Sigmoid colon (tissue), 7 donors: ENCODE measurements at regions of chr14 and their contacts with region 1.

Region 1: DNA sequence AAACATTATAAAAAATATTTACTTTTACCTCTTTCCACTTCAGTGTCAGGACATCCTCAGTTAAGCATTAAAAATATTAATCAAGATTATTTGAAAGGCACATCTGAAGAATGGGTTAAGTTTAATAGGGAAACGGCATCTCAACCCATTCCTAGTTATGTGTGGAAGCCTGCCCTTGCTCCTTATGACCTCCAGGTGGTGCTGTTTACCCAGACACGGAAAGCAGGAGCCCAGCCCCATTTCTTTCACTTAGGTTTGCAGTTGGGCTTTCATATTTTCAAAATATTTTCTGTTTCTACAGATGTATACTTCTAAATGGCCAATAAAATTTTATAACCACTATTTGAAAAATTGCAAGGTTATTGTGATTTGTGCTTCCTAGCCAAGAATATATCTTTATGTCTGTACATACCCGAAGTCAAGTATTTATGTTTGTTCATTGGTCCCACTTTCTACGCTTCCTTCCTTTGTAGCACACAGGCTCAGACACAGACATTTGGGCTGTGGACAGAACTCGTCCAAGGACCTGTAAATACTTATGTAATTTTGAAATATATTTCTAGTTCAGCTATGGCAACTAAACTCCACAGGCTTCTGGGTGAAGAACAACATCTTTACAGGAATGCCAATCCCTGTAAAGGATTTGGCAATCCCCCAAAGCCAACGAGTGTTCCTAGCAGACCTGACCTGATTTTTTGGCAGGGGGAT is 247.1 kb downstream of the AKAP6 start:
- DNase-seq: peak; percentile 72
- H3K4me3 ChIP-seq: peak overlapping the region in 3 of 4 donors; percentile 21 to 39 (median 31)
- H3K27ac ChIP-seq: peak overlapping the region in 3 of 4 donors; percentile 7 to 39 (median 38)
- H3K4me1 ChIP-seq: peaks cover 0 to 25% (median 11%) of the 10 kb centered on the region in 4 donors
- H3K27me3 ChIP-seq: no peaks in the 10 kb centered on the region
- CTCF ChIP-seq: peak; percentile 84 to 94 (median 89)
- EP300 ChIP-seq: no peak
- POLR2A ChIP-seq: no peak

Region 2: GRCh38 chr14:32536175-32536574 is 40.1 kb before region 1 on chr14:
- intact Hi-C with region 1: no loop called
- DNase-seq: no peak
- H3K4me3 ChIP-seq: no peak overlapping the region
- H3K27ac ChIP-seq: no peak overlapping the region
- H3K4me1 ChIP-seq: peaks cover 0 to under 1% (median 0%) of the 10 kb centered on the region in 4 donors
- H3K27me3 ChIP-seq: no peaks in the 10 kb centered on the region
- CTCF ChIP-seq: no peak
- EP300 ChIP-seq: no peak
- POLR2A ChIP-seq: no peak

Region 3: GRCh38 chr14:32826404-32827082 is 250.3 kb after region 1 on chr14:
- intact Hi-C with region 1: loop called (anchors 10 kb)
- DNase-seq: no peak
- H3K4me3 ChIP-seq: no peak overlapping the region
- H3K27ac ChIP-seq: peak overlapping the region in 3 of 4 donors; percentile 11 to 43 (median 40)
- H3K4me1 ChIP-seq: peaks cover 0 to 16% (median 7%) of the 10 kb centered on the region in 4 donors
- H3K27me3 ChIP-seq: no peaks in the 10 kb centered on the region
- CTCF ChIP-seq: no peak
- EP300 ChIP-seq: no peak
- POLR2A ChIP-seq: no peak

Region 4: DNA sequence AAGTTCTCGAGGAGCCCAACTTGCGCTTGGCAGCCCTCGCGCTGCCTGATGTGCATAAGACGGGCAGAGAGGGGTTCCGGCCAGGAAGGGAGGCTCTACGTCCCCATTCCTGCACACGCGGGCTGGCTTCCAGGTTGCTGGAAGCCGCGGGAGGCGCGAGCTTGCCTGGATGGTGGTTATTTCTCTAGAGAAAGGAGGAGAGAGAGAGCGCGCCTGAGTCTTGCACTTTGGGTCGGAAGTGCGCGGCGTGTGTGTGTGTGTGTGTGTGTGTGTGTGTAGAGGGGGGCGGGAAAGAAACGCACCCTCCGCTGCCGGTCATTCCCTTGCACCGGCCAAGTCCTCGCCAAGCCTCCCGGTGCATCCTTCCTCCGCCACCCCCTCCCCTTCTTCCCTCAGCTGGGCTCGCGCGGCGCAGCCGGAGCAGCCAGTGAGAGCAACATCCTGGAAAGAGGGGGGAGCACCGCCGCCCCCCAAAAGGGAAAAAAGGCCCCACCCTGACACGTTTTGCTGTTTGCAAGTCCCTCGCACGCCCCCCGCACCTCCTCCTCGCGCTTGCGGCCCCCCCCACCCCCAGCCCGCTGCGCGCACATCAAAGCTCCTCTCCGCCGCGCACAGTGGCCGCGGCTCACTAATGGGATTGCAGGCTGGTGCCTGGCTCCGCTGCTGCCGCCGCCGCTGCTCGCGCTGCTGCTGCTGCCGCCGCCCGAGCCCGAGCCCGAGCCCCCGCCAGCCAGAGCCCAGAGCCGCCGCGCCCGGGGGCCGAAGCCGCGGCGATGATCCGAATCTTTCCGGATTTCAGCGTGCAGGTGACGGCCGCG is 358.0 kb after region 1 on chr14:
- intact Hi-C with region 1: loop called (anchors 5 kb)
- DNase-seq: peak; percentile 70
- H3K4me3 ChIP-seq: peak overlapping the region; percentile 49 to 70 (median 62)
- H3K27ac ChIP-seq: peak overlapping the region; percentile 35 to 68 (median 52)
- H3K4me1 ChIP-seq: peaks cover 0 to 35% (median 19%) of the 10 kb centered on the region in 4 donors
- H3K27me3 ChIP-seq: peaks cover 0 to 14% (median 0%) of the 10 kb centered on the region in 3 donors
- CTCF ChIP-seq: no peak
- EP300 ChIP-seq: no peak
- POLR2A ChIP-seq: no peak

Region 5: DNA sequence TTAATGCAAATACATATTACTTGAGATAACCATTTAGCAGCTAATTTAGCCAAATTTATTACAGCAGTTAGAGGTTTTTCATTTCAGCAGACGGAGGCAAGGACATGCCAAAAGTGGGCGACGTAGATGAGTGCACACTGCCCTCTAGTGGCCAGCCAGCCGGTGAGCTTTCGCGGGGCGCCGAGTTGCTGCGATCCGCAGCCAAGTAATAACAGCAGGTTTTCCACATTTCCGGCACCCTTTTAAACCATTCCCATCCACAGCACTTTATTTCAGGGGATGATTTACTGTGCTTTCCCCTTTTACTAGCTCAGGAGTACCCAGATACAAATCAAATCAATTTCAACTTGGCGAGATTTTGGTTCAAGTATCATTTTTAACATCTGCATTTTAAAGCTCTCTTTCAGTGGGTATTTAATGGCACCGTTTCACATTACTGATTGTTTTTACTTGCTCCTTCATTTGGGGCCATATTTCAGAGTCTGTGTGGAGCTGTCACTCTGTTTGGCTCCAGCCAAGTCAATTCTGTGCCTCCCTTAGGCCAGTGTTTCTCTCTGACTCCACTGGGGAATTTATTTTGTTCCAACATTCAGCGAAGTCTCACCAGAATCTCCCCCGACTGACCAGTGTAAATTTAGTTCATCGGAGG is 1216.6 kb after region 1 on chr14:
- intact Hi-C with region 1: loop called (anchors 2 kb)
- DNase-seq: peak; percentile 90
- H3K4me3 ChIP-seq: peak overlapping the region in 3 of 4 donors; percentile 21 to 40 (median 36)
- H3K27ac ChIP-seq: peak overlapping the region in 3 of 4 donors; percentile 14 to 36 (median 32)
- H3K4me1 ChIP-seq: peaks cover 0 to 15% (median 1%) of the 10 kb centered on the region in 4 donors
- H3K27me3 ChIP-seq: no peaks in the 10 kb centered on the region
- CTCF ChIP-seq: peak; percentile 78 to 94 (median 83)
- EP300 ChIP-seq: no peak
- POLR2A ChIP-seq: no peak